Common myeloid progenitor, CD34-positive (primary cell): ENCODE measurements at regions of chr7 and their contacts with region 1.

Region 1: DNA sequence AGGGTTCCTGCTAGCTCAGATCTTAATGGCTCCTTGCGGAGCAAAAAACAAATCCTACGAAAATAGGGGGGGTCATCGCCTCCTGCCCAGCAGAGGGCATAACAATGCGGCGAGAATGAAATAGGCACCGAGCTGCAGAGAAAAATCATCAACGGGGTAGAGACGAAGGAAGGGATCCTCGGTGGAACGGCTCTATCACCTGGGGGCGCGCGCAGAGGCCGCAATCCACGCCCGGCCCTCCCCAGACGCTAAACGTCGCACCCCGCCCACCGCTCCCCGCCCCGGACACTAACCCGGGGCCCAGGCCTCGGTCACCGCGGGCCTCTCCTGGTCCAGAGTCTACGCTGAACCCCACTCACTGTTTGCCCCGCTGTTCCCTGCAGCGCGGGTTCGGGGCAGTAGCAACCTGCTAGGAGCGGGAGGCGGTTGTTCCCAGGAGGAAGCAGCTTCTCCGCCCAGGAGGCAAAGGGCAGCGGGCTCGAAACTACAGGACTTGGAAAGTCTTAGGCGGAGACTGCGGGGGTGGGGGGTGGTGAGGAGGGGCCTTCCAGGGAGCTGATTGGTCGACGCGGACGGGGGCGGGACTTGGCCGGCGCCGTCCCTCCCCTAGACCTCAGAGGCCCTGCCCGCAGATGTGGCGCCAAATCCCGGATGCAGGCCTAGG is at the start of gene TCAF1:
- DNase-seq: peak; percentile 93 to 96 (median 96)
- H3K4me3 ChIP-seq: peak within 1 kb of the TSS; percentile 64 to 92 (median 89)
- H3K27ac ChIP-seq: peak within 1 kb of the TSS; percentile 81 to 89
- H3K4me1 ChIP-seq: peaks cover 13 to 16% (median 15%) of the 10 kb centered on the region in 4 experiments
- H3K27me3 ChIP-seq: no peaks in the 10 kb centered on the region

Region 2: DNA sequence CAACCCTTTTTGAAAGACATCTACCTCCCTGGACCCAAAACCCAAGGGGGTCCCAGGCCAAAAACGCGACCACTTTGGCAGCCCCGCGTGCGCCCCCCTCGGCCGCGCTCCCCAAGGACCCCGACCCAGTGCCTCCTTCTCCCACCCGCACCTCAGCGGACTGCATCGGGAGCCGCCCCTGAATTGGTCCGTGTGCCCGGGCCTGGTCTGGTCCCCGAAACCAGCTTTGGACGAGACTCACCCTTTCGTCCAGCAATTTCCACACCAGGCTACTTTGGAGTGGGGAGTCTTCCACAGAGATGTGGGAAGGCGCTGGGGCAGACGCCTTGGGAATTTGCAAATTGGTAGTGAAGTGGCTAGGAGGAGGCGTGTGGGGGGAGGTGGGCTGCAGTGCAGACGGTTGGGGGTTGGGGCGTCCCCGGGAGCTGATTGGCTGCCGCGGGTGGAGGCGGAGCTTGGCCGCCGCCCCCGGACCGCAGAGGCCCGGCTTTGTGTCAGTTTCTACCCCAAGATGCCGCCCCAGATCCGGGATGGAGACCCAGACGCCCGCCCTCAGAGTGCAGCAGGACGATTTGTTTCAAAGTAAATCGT is 16.7 kb before region 1 on chr7:
- CTCF ChIA-PET with region 1: interaction called, 80 read pairs
- POLR2A ChIA-PET with region 1: interaction called, 6 read pairs
- DNase-seq: peak; percentile 56 to 77 (median 72)
- H3K4me3 ChIP-seq: peak overlapping the region; percentile 46 to 86 (median 77)
- H3K27ac ChIP-seq: peak overlapping the region in 1 of 2 experiments; percentile 34
- H3K4me1 ChIP-seq: peaks cover 0 to 17% (median 12%) of the 10 kb centered on the region in 4 experiments
- H3K27me3 ChIP-seq: no peaks in the 10 kb centered on the region